AG04449 (cell line): ENCODE measurements at regions of chr2 and their contacts with region 1.

Region 1: GRCh38 chr2:177164584-177165052 is 48.0 kb upstream of the HNRNPA3 start:
- DNase-seq: no peak
- H3K4me3 ChIP-seq: peak overlapping the region; percentile 44
- CTCF ChIP-seq: peak; percentile 98

Region 2: GRCh38 chr2:177148477-177149154 is 16.0 kb before region 1 on chr2:
- CTCF ChIA-PET with region 1: interaction called, 90 read pairs
- POLR2A ChIA-PET with region 1: no interaction called
- DNase-seq: no peak
- H3K4me3 ChIP-seq: peak overlapping the region; percentile 54
- CTCF ChIP-seq: peak; percentile 91

Region 3: DNA sequence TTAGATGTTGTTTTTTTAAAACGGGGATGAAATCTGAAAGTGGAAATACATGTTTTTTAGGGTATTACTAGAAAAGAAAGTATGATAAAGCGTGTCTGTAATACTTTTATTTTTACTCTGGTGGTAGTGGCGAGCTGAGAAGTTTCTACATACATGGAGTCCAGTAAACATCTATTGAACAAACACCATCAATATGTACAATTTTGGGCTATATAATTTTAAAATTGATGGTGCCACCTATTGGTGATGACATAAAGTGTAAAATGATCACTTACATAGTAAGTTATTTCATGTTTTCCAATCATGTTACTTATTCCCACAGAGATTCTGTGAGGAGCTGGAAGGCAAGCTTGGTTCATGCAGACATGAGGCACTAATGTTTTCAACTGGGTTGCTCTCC is 131.4 kb after region 1 on chr2:
- CTCF ChIA-PET with region 1: interaction called, 57 read pairs
- POLR2A ChIA-PET with region 1: no interaction called
- DNase-seq: no peak
- H3K4me3 ChIP-seq: no peak overlapping the region
- CTCF ChIP-seq: no peak

Region 4: GRCh38 chr2:177332041-177332991 is 167.7 kb after region 1 on chr2:
- CTCF ChIA-PET with region 1: interaction called, 202 read pairs
- POLR2A ChIA-PET with region 1: no interaction called
- DNase-seq: no peak
- H3K4me3 ChIP-seq: no peak overlapping the region
- CTCF ChIP-seq: peak; percentile 50

Region 5: DNA sequence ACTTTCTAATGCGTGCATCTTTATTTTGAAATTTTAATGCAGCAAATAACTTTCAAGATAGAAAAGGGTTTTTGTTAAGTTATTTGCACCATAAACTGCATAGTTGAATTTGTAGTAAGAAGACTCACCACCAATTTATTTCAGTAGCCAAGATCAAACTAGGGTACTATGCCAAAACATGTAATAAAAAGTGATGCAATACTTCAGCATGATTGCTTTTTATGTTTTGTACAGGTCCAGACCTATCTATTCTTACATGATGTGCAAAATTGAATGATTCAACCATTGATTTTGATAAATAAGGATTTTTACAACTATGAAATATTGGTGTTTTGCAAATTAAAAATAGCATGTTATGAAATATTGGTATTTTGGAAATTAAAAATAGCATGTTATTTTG is 254.7 kb after region 1 on chr2:
- CTCF ChIA-PET with region 1: interaction called, 102 read pairs
- POLR2A ChIA-PET with region 1: no interaction called
- DNase-seq: peak; percentile 19
- H3K4me3 ChIP-seq: no peak overlapping the region
- CTCF ChIP-seq: no peak

Region 6: DNA sequence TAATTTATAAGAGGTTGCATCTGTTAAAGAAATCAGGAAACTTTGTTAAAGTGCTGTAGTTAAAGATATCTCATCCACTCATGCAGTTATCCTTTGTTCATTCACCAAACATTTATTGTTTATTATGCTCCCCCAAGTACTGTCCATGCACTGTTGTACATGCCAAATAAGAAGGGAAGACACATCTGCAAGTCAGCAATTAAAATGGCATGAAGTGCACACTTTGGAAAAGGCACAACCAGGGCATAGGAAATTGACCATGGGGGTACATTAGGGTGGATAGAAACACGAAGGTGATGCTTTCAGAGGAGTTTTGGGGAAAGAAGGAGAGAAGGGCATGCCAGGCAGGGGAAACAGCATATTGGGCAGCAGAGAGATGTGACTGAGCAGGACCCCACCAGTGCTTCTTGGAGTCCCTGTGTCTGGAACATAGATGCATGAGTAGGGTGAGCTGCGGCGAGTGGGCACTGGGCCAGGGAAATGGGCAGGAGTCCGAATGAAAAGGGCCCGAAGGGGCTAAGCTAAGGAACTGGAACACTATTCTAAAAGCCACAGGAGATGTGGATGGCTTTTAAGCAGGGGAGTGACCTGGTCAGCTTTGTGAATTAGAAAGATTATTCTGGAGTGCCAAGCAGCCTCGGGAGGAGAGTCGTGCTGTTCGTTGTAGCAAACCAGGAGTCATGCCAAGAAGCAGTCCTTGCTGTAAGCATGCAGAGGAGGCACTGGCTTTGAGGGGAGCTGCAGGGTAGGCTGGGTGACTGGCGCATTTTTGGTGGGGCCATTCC is 544.2 kb after region 1 on chr2:
- CTCF ChIA-PET with region 1: no interaction called
- POLR2A ChIA-PET with region 1: no interaction called
- DNase-seq: no peak
- H3K4me3 ChIP-seq: no peak overlapping the region
- CTCF ChIP-seq: no peak

Region 7: DNA sequence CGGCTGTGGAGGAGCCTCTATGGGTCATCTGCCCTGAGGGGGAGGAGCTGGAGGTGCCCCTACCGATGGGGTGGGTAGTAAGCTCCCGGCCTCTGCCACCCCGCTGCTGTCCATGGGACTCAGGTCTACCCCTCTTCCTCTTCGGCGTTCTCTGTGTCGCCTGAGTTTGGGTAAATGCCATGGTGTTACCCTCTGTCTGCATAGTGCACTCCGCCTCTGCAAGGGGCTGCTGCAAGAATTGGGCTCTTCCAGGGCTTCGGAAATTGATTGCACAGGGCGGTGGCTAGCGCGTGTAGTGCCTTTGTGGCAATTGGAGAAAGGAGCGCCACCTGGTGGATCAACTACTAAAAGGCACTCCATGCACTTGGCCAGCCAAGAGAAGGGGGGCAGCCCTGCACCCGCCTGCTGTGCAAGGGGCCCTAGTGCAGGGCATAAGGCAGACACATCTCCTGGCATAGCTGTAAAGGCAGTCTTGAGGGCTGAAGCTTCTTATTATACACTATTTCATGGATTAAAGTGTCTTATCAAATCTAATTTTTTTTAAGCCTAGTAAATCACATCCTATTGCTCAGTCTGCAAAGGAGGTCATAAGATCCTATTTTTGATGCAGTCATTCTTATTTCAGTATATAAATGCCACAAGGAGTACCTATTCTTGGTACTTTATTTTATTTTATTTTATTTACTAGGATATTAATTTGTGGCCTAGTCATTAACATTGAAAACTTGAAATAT is 599.1 kb after region 1 on chr2:
- CTCF ChIA-PET with region 1: interaction called, 14 read pairs
- POLR2A ChIA-PET with region 1: no interaction called
- DNase-seq: no peak
- H3K4me3 ChIP-seq: no peak overlapping the region
- CTCF ChIP-seq: peak; percentile 88